Activated B cell treated with CpG ODN at 0.5 μM for 24 hours (primary cell): ENCODE measurements at regions of chr2 and their contacts with region 1.

Region 1: DNA sequence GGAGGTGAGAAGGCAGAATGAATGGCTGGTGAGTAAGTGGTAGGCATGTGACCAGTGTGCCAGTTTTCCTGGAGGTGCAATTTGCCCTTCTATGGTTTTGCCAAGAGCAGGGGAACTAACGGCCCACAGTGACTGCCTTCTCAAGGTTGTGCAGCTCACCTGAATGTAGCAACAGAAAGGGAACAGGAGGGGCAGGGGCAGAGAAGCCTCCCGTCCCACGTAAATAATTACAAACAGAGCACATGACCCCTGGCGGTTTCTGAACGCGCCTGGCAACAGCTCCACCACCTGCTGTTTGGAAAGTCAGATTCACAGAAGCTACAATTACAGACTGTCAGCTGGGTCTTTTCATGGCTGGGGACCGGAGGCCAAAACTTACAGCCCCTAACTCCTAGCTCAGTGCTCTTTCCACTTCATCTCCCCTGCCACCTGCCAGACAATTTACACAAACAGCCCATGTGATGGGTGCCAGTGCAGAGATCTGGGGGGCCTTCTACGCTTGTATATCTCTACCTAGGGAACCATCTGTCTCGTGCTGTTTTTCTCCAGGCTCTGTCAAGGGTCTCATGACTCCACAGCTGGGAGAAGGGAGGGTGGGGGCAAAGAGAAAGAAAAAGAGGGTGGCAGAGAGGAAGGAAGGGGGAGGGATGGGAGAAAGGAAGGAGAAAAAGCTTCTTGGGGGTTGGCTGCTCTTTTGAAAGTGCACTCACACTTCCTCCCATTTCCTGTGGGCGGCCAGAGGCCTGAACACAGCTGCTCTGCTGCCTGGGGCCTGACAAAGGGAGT is 69.6 kb downstream of the POLR1A start:
- DNase-seq: peak; percentile 51
- ATAC-seq: peak; percentile 70
- H3K4me3 Mint-ChIP-seq: peak overlapping the region; percentile 70
- H3K27ac Mint-ChIP-seq: peak overlapping the region; percentile 97
- H3K4me1 Mint-ChIP-seq: peaks cover 61% of the 10 kb centered on the region
- H3K27me3 Mint-ChIP-seq: no peaks in the 10 kb centered on the region
- CTCF ChIP-seq: no peak

Region 2: GRCh38 chr2:85750587-85751575 is 285.2 kb before region 1 on chr2:
- CTCF ChIA-PET with region 1: no interaction called
- POLR2A ChIA-PET with region 1: no interaction called
- intact Hi-C with region 1: loop called (anchors 5 kb)
- DNase-seq: no peak
- ATAC-seq: peak; percentile 56
- H3K4me3 Mint-ChIP-seq: no peak overlapping the region
- H3K27ac Mint-ChIP-seq: no peak overlapping the region
- H3K4me1 Mint-ChIP-seq: peaks cover 65% of the 10 kb centered on the region
- H3K27me3 Mint-ChIP-seq: peaks cover 19% of the 10 kb centered on the region
- CTCF ChIP-seq: no peak

Region 3: DNA sequence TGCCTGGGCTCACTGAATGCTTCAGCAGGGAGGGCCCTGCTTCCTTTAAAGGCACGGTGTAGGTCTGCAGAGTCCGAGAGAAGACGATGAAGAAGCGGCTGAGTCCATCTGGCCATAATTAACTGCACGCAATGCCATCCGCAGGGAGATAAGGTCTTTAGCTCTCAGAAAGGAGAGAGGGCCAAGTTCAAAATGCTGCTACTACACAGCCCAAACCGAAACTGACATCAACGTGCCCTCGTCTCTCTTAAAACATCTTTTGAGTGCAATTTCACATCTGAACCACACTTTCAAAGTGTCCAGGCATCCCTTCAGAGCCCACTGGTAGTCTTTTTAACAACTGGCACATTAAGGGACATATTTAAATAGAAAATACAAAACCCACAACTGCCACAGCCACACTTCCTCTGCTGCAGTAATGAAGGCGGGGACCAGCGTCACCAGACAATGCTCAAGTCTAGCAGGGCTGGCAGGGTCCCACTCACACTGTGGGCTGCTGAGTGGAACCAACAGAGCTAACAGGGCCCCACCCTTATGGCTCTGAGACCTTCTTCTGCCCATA is 183.1 kb before region 1 on chr2:
- CTCF ChIA-PET with region 1: interaction called, 7 read pairs
- POLR2A ChIA-PET with region 1: interaction called, 28 read pairs
- intact Hi-C with region 1: loop called (anchors 1 kb)
- DNase-seq: peak; percentile 29
- ATAC-seq: peak; percentile 76
- H3K4me3 Mint-ChIP-seq: peak overlapping the region; percentile 79
- H3K27ac Mint-ChIP-seq: peak overlapping the region; percentile 99
- H3K4me1 Mint-ChIP-seq: peaks cover 79% of the 10 kb centered on the region
- H3K27me3 Mint-ChIP-seq: no peaks in the 10 kb centered on the region
- CTCF ChIP-seq: no peak

Region 4: DNA sequence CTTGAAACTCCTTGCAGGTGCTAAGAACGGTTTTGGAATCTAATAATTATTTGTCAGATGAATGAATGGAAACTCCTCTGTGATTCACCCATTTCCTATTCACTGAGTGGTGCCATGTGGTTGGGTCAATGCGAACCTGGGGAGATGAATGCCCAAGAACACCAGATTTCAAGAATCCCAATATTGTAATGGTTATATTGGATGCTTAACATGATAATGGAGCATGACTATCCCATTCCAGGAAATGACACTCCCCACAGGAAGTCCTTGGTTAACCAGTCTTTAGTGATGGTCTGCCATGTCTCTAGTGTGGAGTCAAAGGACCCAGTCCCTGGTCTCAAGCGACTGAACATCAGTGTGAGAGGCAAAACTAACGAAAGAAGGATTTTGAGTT is 79.4 kb before region 1 on chr2:
- CTCF ChIA-PET with region 1: no interaction called
- POLR2A ChIA-PET with region 1: no interaction called
- intact Hi-C with region 1: no loop called
- DNase-seq: no peak
- ATAC-seq: no peak
- H3K4me3 Mint-ChIP-seq: no peak overlapping the region
- H3K27ac Mint-ChIP-seq: no peak overlapping the region
- H3K4me1 Mint-ChIP-seq: no peaks in the 10 kb centered on the region
- H3K27me3 Mint-ChIP-seq: no peaks in the 10 kb centered on the region
- CTCF ChIP-seq: no peak

Region 5: GRCh38 chr2:85976106-85976920 is 59.8 kb before region 1 on chr2:
- CTCF ChIA-PET with region 1: interaction called, 4 read pairs
- POLR2A ChIA-PET with region 1: no interaction called
- intact Hi-C with region 1: loop called (anchors 5 kb)
- DNase-seq: no peak
- ATAC-seq: no peak
- H3K4me3 Mint-ChIP-seq: no peak overlapping the region
- H3K27ac Mint-ChIP-seq: no peak overlapping the region
- H3K4me1 Mint-ChIP-seq: peaks cover 21% of the 10 kb centered on the region
- H3K27me3 Mint-ChIP-seq: no peaks in the 10 kb centered on the region
- CTCF ChIP-seq: no peak

Region 6: GRCh38 chr2:86017901-86018896 is 17.9 kb before region 1 on chr2:
- CTCF ChIA-PET with region 1: interaction called, 11 read pairs
- POLR2A ChIA-PET with region 1: interaction called, 11 read pairs
- intact Hi-C with region 1: no loop called
- DNase-seq: no peak
- ATAC-seq: no peak
- H3K4me3 Mint-ChIP-seq: no peak overlapping the region
- H3K27ac Mint-ChIP-seq: peak overlapping the region; percentile 85
- H3K4me1 Mint-ChIP-seq: peaks cover 67% of the 10 kb centered on the region
- H3K27me3 Mint-ChIP-seq: no peaks in the 10 kb centered on the region
- CTCF ChIP-seq: no peak

Region 7: GRCh38 chr2:86054535-86055082 is 18.5 kb after region 1 on chr2:
- CTCF ChIA-PET with region 1: no interaction called
- POLR2A ChIA-PET with region 1: no interaction called
- intact Hi-C with region 1: no loop called
- DNase-seq: no peak
- ATAC-seq: no peak
- H3K4me3 Mint-ChIP-seq: no peak overlapping the region
- H3K27ac Mint-ChIP-seq: no peak overlapping the region
- H3K4me1 Mint-ChIP-seq: no peaks in the 10 kb centered on the region
- H3K27me3 Mint-ChIP-seq: no peaks in the 10 kb centered on the region
- CTCF ChIP-seq: no peak

Region 8: DNA sequence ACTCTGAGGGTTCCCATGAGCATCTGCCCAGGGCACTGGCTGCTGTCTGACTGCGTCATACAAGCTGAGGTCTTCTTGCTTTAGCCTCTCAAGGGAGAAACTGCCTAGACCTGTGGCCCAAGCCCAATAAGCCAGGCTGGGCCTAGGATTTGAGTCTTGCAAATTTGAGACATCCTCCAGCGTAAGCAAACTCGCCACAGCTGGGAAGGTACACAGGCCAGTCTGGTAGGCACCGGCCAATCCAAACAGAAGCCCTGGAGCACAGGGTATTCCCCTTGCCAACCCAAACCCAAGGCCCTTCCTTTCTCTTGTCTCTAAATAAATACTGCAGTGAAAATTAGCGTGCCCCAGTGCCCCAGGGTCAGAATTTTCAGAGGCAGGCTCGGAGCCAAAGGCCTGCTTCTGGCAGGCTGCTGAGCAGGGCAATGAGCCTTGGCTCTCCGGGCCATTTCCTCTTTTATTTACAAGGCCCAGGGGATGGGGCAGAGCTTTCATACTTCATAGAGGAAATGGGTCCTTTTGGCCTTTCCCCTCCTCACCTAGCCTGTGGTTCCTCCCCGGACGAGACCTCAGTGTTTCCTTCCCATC is 36.3 kb after region 1 on chr2:
- CTCF ChIA-PET with region 1: interaction called, 64 read pairs
- POLR2A ChIA-PET with region 1: interaction called, 18 read pairs
- intact Hi-C with region 1: loop called (anchors 1 kb)
- DNase-seq: peak; percentile 38
- ATAC-seq: peak; percentile 93
- H3K4me3 Mint-ChIP-seq: peak overlapping the region; percentile 28
- H3K27ac Mint-ChIP-seq: peak overlapping the region; percentile 91
- H3K4me1 Mint-ChIP-seq: peaks cover 34% of the 10 kb centered on the region
- H3K27me3 Mint-ChIP-seq: no peaks in the 10 kb centered on the region
- CTCF ChIP-seq: no peak

Region 9: DNA sequence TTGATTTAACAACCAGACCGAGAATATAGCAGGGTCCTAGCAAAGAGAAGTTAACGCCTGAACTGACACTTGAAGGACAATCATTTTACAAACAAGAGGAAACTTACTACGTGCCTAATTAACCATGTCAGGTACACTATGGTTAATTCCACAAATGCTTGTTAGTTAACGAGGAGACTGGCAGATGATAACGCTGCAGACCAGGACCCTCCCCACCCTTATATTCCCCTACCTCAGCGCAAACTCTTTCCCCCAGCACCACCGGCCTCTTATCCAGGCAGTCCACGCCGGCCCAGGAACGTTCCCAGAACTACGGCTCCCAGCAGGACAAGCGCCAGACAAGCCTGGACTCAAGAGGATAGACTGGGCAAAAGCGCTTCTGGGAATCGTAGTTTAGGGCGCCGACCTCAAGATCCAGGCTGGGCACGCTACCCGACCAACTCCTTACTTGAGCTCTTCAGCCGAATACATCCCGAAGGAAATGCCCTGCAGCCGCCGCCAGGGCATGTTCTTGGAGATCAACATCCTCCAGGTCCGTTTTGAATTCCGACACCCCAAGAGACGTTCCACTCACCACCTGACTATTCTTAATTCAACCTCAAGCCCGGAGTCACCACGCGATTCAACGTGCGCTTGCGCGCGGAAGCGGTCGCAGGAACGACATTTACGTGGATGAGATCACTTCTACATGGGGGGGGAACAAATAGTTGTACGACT is 69.3 kb after region 1 on chr2 and contains the start of gene POLR1A:
- CTCF ChIA-PET with region 1: no interaction called
- POLR2A ChIA-PET with region 1: interaction called, 10 read pairs
- intact Hi-C with region 1: no loop called
- DNase-seq: peak; percentile 70
- ATAC-seq: peak; percentile 78
- H3K4me3 Mint-ChIP-seq: peak within 1 kb of the TSS; percentile 99
- H3K27ac Mint-ChIP-seq: peak within 1 kb of the TSS; percentile 100
- H3K4me1 Mint-ChIP-seq: peaks cover 53% of the 10 kb centered on the region
- H3K27me3 Mint-ChIP-seq: no peaks in the 10 kb centered on the region
- CTCF ChIP-seq: no peak
- total RNA-seq, gene POLR1A: 47.8 and 53.4 TPM in 2 replicates